ENCODE measurements at regions of chr17 and their contacts with region 1.

Region 1: DNA sequence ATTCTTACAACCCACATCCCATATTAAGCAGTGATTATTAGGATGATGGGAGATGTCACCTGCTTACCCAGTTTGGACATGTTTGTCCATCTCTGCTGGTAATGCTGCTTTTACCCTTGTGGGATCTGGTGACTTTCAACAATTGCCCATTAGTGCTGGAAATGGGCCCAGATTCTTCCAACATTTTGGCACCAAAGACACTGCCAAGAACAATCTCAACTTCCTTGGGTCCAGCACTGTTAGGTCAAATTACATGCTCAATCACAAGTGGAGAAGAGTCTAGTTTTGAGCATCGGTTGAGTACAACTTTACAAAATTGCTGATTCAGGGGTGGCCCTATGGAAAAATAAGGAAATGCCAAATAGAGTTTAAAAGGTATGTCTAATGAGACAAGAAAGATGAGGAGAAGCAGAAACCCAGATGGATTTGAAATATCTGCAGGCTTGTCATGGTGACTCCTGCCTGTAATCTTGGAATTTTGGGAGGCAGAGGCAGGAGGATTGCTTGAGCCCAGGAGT is 13.0 kb upstream of the ZFP3 start:
- DNase-seq: no peak
- ATAC-seq: no peak
- H3K4me3 ChIP-seq: no peak overlapping the region
- H3K27ac ChIP-seq: no peak overlapping the region
- H3K4me1 ChIP-seq: no peaks in the 10 kb centered on the region
- H3K27me3 ChIP-seq: no peaks in the 10 kb centered on the region
- CTCF ChIP-seq: no peak
- POLR2A ChIP-seq: no peak

Region 2: DNA sequence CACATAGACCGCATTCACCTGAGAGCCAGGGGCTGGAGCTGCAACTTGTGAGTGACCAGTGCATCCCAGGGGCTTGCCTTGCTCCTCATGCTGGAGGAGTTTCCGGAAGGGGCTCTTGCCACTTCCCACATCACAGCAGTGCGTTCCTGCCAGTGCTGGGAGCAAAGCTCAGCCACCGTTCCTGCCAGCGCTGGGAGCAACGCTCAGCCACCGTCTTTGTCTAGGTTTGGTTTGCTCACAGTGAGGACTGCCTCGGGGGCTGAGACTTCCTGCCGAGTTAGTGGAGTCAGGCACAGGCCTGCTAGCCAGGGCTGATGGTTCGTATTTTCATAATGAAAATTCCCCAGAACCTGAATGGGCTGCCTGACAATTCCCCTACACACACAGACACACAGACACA is 157.0 kb before region 1 on chr17:
- in situ Hi-C with region 1: loop called in 3 of 4 experiments (anchors 5 to 10 kb)
- intact Hi-C with region 1: loop called (anchors 1 kb)
- DNase-seq: no peak
- ATAC-seq: no peak
- H3K4me3 ChIP-seq: no peak overlapping the region
- H3K27ac ChIP-seq: peak overlapping the region; percentile 50 to 77 (median 76)
- H3K4me1 ChIP-seq: peaks cover 13 to 14% of the 10 kb centered on the region in 2 donors
- H3K27me3 ChIP-seq: no peaks in the 10 kb centered on the region
- CTCF ChIP-seq: no peak
- POLR2A ChIP-seq: no peak

Region 3: DNA sequence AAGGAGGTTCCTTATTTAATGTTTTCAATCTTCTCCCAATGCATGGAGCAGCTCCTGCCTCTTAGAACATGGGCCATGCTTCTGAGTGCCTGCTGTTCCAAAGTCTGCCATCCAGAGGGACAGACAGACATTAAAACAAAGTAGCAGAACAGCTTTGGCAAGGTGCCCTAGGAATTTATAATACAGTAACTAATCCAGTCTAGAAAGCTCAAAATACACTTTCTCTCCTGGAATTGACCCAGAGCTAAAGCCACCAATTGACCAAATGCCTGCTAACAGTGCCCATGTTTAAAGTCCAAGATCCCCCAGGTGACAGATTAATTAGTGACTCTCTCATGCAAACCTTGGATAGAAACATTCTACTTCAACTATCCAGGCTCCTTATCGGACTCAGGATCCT is 151.3 kb before region 1 on chr17:
- in situ Hi-C with region 1: loop called in 3 of 4 experiments (anchors 5 to 10 kb)
- intact Hi-C with region 1: loop called (anchors 1 kb)
- DNase-seq: no peak
- ATAC-seq: no peak
- H3K4me3 ChIP-seq: no peak overlapping the region
- H3K27ac ChIP-seq: no peak overlapping the region
- H3K4me1 ChIP-seq: peaks cover 4 to 6% of the 10 kb centered on the region in 2 donors
- H3K27me3 ChIP-seq: no peaks in the 10 kb centered on the region
- CTCF ChIP-seq: no peak
- POLR2A ChIP-seq: no peak

Region 4: GRCh38 chr17:4980644-4981216 is 84.6 kb before region 1 on chr17:
- in situ Hi-C with region 1: loop called in 2 of 4 experiments (anchors 5 to 10 kb)
- intact Hi-C with region 1: loop called (anchors 1 kb)
- DNase-seq: no peak
- ATAC-seq: peak; percentile 65 to 67
- H3K4me3 ChIP-seq: no peak overlapping the region
- H3K27ac ChIP-seq: peak overlapping the region in 1 of 4 donors; percentile 43
- H3K4me1 ChIP-seq: peaks cover 5% of the 10 kb centered on the region in 2 donors
- H3K27me3 ChIP-seq: no peaks in the 10 kb centered on the region
- CTCF ChIP-seq: peak; percentile 75 to 88 (median 85)
- POLR2A ChIP-seq: no peak

Region 5: DNA sequence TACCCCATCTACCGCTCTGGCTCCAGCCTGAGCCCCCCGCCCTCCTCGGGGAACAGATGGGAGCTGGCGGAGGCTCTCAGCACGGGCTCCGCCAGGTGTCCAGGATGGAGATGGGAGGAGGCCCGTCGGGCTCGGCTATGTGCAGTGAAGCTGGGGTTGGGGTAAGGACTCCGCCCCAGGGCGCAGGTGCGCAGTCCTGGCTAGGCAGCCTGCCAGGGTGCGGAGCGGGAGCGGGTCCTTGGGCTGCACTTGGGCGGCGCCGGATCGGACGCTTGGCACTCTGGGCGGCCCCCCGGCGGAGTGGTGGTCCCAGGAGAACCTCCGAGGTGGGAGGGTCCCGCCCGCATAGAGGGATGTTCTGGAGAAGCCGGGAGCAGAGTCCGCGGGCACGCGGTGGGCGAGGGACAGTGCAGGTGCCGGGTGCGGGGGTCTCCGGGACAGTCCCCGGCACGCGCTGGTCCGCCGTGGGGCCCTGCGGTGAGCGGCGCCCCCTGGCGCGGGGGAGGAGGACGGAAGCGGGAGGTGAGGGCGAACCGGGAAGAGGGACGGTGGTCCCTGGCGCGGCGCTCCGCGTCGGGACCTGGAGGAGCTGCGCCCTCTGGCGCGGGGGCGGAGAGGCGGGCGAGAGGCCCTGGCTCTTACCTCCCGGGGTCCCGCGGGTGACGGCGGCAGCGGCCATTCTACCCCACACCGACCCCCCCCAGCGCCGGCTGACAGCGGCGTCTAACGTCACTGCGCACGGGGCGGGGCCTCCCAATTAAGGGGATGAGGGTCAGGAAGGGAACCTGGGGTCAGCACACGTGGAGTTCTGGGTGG is 78.1 kb before region 1 on chr17 and contains the start of gene CAMTA2:
- in situ Hi-C with region 1: loop called in 2 of 4 experiments (anchors 5 to 10 kb)
- intact Hi-C with region 1: no loop called
- DNase-seq: peak; percentile 84 to 90
- ATAC-seq: peak; percentile 92
- H3K4me3 ChIP-seq: peak within 1 kb of the TSS; percentile 76 to 100 (median 94)
- H3K27ac ChIP-seq: peak within 1 kb of the TSS; percentile 88 to 98 (median 96)
- H3K4me1 ChIP-seq: peaks cover 17 to 20% of the 10 kb centered on the region in 2 donors
- H3K27me3 ChIP-seq: no peaks in the 10 kb centered on the region
- CTCF ChIP-seq: peak; percentile 80 to 96 (median 94)
- POLR2A ChIP-seq: peak; percentile 89 to 91
- total RNA-seq, gene CAMTA2: 19.1 to 46.4 (median 36.4) TPM

Region 6: GRCh38 chr17:5031365-5032082 is 33.8 kb before region 1 on chr17:
- in situ Hi-C with region 1: no loop called
- intact Hi-C with region 1: loop called (anchors 2 kb)
- DNase-seq: peak; percentile 40 to 65
- ATAC-seq: peak; percentile 58 to 61
- H3K4me3 ChIP-seq: peak overlapping the region; percentile 43 to 53 (median 47)
- H3K27ac ChIP-seq: no peak overlapping the region
- H3K4me1 ChIP-seq: no peaks in the 10 kb centered on the region
- H3K27me3 ChIP-seq: peaks cover 8 to 11% (median 9%) of the 10 kb centered on the region in 3 donors
- CTCF ChIP-seq: peak; percentile 66 to 85 (median 83)
- POLR2A ChIP-seq: no peak

Measured in gastrocnemius medialis (tissue), 4 donors.